ENCODE measurements at regions of chr1 and their contacts with region 1.

Region 1: GRCh38 chr1:52404116-52404986 is at the starts of genes ORC1 and PRPF38A:
- DNase-seq: peak; percentile 89 to 97 (median 96)
- ATAC-seq: peak; percentile 99
- H3K4me3 ChIP-seq: peak within 1 kb of the TSS; percentile 83
- H3K4me3 Mint-ChIP-seq: peak within 1 kb of the TSS; percentile 96 to 100 (median 99)
- H3K27ac ChIP-seq: peak within 1 kb of the TSS; percentile 92
- H3K27ac Mint-ChIP-seq: peak within 1 kb of the TSS; percentile 95 to 100 (median 98)
- H3K4me1 ChIP-seq: peaks cover 10 to 16% of the 10 kb centered on the region in 2 donors
- H3K4me1 Mint-ChIP-seq: peaks cover 11 to 66% (median 47%) of the 10 kb centered on the region in 7 donors
- H3K27me3 ChIP-seq: no peaks in the 10 kb centered on the region
- H3K27me3 Mint-ChIP-seq: no peaks in the 10 kb centered on the region
- total RNA-seq, gene ORC1: 0.97 to 25.2 (median 1.3) TPM
- total RNA-seq, gene PRPF38A: 62.1 to 98.7 (median 81.6) TPM

Region 2: DNA sequence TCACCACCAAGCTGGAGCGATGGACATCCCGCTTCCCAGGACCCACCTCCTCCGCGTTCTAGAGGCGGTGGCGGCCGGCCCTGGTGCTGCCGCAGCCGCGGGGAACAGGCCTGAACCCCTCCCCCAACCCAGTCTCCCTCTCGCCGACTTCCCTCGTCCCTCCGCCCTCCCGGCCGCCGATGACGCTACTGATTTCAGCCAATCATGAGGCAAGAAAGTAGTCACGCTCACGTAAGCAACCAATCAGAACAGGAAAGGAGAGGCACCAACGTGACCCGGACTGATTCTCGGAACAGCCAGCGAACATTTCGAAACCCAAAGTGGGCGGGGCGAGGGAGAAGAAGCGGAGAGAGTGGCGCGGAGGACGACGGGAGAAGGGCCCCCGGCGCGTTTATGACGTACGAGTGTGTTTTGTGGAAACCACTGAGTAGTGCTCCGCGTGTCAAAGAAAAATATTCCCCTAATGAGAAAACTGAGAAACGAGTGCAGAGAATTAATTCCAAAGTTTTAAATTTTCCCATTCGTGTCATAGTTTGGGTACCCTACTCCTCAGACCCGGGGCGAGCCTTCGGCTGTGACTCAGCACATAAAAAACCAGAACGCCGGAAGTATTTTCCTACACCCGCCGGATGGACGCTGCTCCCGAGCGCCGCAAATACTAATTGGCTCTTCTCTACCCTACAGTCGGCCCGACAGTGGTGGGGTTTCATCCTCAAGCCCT is 525.6 kb before region 1 on chr1 and contains the start of gene NRDC:
- CTCF ChIA-PET with region 1: no interaction called
- POLR2A ChIA-PET with region 1: interaction called, 3 read pairs
- intact Hi-C with region 1: loop called (anchors 1 to 2 kb)
- DNase-seq: peak; percentile 95 to 100 (median 99)
- ATAC-seq: peak; percentile 95
- H3K4me3 ChIP-seq: peak within 1 kb of the TSS; percentile 87
- H3K4me3 Mint-ChIP-seq: no peak within 1 kb of the TSS
- H3K27ac ChIP-seq: peak within 1 kb of the TSS; percentile 98
- H3K27ac Mint-ChIP-seq: no peak within 1 kb of the TSS
- H3K4me1 ChIP-seq: peaks cover 16 to 26% of the 10 kb centered on the region in 2 donors
- H3K4me1 Mint-ChIP-seq: peaks cover 0 to 30% (median 17%) of the 10 kb centered on the region in 7 donors
- H3K27me3 ChIP-seq: no peaks in the 10 kb centered on the region
- H3K27me3 Mint-ChIP-seq: peaks cover 7 to 15% (median 10%) of the 10 kb centered on the region in 5 donors
- total RNA-seq, gene NRDC: 93.1 to 194 (median 122) TPM

Region 3: DNA sequence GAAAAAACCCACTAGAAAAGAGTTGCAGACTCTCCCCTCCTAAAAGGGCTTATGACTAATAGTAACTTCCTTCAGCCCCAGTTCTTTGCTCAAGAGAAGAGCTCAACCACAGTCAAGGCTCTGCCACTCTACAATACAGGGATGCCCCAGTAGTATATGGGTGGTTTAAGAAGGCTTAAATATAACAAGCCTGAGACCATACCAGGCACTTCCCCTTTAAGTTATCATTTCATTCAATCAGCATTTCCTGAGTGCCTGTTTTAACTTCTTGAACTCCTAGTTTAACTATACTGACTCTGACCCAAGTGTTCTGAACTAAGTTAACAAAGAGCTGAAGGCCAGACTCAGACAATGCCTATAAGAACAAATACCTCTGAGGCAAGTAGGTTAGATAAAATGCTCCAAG is 19.9 kb after region 1 on chr1:
- CTCF ChIA-PET with region 1: interaction called, 5 read pairs
- POLR2A ChIA-PET with region 1: interaction called, 53 read pairs
- intact Hi-C with region 1: loop called (anchors 1 kb)
- DNase-seq: peak in 7 of 9 donors; percentile 38 to 71 (median 57)
- ATAC-seq: peak; percentile 93
- H3K4me3 ChIP-seq: peak overlapping the region; percentile 14
- H3K4me3 Mint-ChIP-seq: peak overlapping the region; percentile 49 to 81 (median 74)
- H3K27ac ChIP-seq: peak overlapping the region; percentile 63
- H3K27ac Mint-ChIP-seq: peak overlapping the region; percentile 85 to 96 (median 91)
- H3K4me1 ChIP-seq: peaks cover 35 to 45% of the 10 kb centered on the region in 2 donors
- H3K4me1 Mint-ChIP-seq: peaks cover 33 to 72% (median 51%) of the 10 kb centered on the region in 7 donors
- H3K27me3 ChIP-seq: no peaks in the 10 kb centered on the region
- H3K27me3 Mint-ChIP-seq: no peaks in the 10 kb centered on the region

Region 4: DNA sequence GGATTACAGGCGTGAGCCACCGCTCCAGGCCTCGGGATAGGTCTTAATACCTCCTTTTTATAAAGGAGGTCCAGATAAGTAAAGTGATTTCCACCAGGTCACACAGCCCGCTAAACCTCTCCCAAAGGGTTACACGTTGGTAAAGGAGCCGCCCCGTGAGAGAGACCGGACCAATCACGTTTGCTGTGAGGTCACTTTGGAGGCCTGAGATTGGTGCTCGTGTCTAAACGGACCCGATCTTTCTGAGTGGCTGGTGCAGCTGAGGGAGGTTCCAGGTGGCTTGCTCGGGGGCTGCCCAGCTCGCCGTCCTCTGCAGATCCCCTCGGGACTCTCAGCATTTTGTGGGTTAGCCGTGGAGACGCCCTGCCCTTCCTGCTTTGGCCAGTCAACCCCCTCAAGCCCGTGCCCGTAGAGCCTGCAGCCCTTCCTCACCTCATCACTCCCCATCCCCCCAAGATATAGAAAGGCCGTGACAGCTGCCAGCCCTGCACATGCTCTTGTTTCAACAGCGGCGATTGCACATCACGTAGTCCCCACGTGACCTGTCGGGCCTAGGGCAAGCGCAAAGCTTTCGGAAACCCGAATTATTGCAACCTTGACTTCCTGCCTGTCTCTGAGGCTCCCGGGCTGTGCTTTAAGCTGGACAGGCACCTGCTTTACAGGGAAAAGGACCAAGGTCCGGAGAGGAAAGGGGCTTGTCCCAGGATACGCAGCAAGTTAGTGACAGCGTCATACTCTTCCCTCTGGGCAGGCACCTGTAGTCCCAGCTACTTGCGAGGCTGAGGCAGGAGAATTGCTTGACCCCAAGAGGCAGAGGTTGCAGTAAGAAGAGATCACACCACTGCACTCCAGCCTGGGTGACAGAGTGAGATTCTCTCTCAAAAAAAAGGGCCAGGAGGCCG is 298.8 kb after region 1 on chr1:
- CTCF ChIA-PET with region 1: no interaction called
- POLR2A ChIA-PET with region 1: no interaction called
- intact Hi-C with region 1: loop called in 1 of 2 experiments (anchors 1 kb)
- DNase-seq: peak; percentile 62 to 89 (median 83)
- ATAC-seq: peak; percentile 95
- H3K4me3 ChIP-seq: peak overlapping the region; percentile 52
- H3K4me3 Mint-ChIP-seq: peak overlapping the region; percentile 75 to 96 (median 92)
- H3K27ac ChIP-seq: peak overlapping the region; percentile 83
- H3K27ac Mint-ChIP-seq: peak overlapping the region; percentile 97 to 99 (median 99)
- H3K4me1 ChIP-seq: peaks cover 6% of the 10 kb centered on the region in 2 donors
- H3K4me1 Mint-ChIP-seq: peaks cover 21 to 46% (median 32%) of the 10 kb centered on the region in 7 donors
- H3K27me3 ChIP-seq: no peaks in the 10 kb centered on the region
- H3K27me3 Mint-ChIP-seq: peaks cover 0 to 12% (median 0%) of the 10 kb centered on the region in 5 donors

Region 5: GRCh38 chr1:53220171-53220961 is 816.0 kb after region 1 on chr1 and contains the start of gene CZIB:
- CTCF ChIA-PET with region 1: no interaction called
- POLR2A ChIA-PET with region 1: no interaction called
- intact Hi-C with region 1: loop called in 1 of 2 experiments (anchors 1 kb)
- DNase-seq: peak; percentile 85 to 97 (median 92)
- ATAC-seq: peak; percentile 97
- H3K4me3 ChIP-seq: peak within 1 kb of the TSS; percentile 80
- H3K4me3 Mint-ChIP-seq: peak within 1 kb of the TSS; percentile 83 to 94 (median 92)
- H3K27ac ChIP-seq: peak within 1 kb of the TSS; percentile 99
- H3K27ac Mint-ChIP-seq: peak within 1 kb of the TSS; percentile 91 to 98 (median 96)
- H3K4me1 ChIP-seq: peaks cover 15% of the 10 kb centered on the region in 2 donors
- H3K4me1 Mint-ChIP-seq: peaks cover 15 to 31% (median 26%) of the 10 kb centered on the region in 7 donors
- H3K27me3 ChIP-seq: no peaks in the 10 kb centered on the region
- H3K27me3 Mint-ChIP-seq: no peaks in the 10 kb centered on the region
- total RNA-seq, gene CZIB: 41.9 to 94.9 (median 51.4) TPM